ENCODE measurements at regions of chr14 and their contacts with region 1.

Region 1: DNA sequence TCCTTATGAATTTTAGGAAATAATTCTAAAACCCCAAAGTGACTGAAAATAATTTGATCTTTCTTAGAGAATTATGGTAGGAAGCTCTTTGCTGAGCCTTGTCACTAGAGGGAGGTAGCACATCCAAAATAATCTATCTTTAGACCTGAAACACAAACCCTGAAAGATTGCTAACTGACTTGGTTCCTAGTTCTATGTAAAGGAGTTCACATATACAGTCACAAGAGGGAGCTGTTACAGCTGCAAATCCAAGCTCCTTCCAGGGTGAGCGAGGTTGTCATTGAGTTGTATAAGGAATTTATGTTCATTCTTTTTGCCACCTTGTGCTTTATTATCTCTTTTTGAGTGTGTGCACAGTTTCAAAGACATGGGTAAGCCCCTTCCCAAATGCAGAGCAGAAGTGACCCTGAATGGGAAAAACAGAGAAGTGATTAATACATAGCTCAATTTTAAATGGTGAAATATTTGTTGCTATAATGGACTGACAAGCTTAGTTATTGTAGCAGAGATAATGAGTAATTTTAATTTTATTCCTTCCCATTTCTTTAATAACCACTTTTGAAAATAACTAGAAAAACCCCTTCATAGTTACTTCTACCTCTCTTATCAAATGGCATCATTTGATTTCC is 387.9 kb downstream of the DAD1 start:
- DNase-seq: peak; percentile 62
- H3K4me3 ChIP-seq: no peak overlapping the region
- H3K27ac ChIP-seq: no peak overlapping the region
- H3K4me1 ChIP-seq: no peaks in the 10 kb centered on the region
- H3K27me3 ChIP-seq: no peaks in the 10 kb centered on the region
- CTCF ChIP-seq: peak; percentile 79 to 81

Region 2: GRCh38 chr14:22122227-22122818 is 78.8 kb before region 1 on chr14:
- CTCF ChIA-PET with region 1: interaction called, 5 read pairs
- dilution Hi-C with region 1: no loop called
- in situ Hi-C with region 1: no loop called
- intact Hi-C with region 1: loop called (anchors 1 kb)
- DNase-seq: peak; percentile 24
- H3K4me3 ChIP-seq: no peak overlapping the region
- H3K27ac ChIP-seq: no peak overlapping the region
- H3K4me1 ChIP-seq: peaks cover 6% of the 10 kb centered on the region
- H3K27me3 ChIP-seq: peaks cover 2% of the 10 kb centered on the region
- CTCF ChIP-seq: peak; percentile 29 to 53

Region 3: DNA sequence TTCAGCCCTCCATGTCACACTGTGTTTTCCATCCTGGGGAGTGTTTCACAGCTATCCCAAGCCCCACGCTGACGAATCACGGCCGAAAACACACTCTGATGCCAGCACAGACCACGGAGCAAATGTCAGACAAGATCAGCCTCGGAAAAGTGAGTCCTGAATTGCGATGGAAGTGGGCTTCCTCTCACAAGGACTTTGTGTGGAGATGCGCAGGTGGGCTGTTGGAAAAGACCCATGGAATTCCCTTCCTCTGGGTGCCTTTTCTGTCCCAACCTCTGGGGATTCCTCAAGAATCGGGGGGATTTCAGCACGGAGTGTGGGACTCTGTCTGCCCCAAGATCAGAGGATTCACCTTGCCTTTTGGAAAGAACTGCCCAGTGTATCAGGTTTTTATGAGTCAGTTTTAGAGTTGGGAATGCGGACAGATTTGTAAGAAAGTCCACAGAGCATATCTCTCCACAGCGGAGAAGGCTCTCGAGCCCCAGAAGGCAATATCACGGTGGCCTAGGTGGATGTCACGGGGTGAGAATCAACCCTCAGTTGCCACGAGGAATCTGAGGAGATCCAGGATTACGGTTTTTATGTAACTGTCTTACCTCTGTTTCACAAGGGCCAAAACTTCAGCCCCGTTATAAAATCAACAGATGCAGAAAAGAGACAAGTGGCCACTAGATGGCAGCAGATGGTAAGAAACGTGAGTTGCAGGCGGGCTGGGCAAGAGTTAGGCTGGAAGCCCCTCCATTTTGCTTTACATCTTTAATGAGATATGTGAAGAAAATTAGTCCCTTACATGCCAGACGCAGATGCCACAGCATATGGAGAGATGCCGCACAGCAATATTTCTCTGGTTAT is 186.1 kb after region 1 on chr14:
- CTCF ChIA-PET with region 1: no interaction called
- dilution Hi-C with region 1: no loop called
- in situ Hi-C with region 1: no loop called
- intact Hi-C with region 1: no loop called
- DNase-seq: peak; percentile 39
- H3K4me3 ChIP-seq: no peak overlapping the region
- H3K27ac ChIP-seq: no peak overlapping the region
- H3K4me1 ChIP-seq: peaks cover 16% of the 10 kb centered on the region
- H3K27me3 ChIP-seq: peaks cover 4% of the 10 kb centered on the region
- CTCF ChIP-seq: peak; percentile 48 to 77